ENCODE measurements at regions of chr1 and their contacts with region 1.

Region 1: DNA sequence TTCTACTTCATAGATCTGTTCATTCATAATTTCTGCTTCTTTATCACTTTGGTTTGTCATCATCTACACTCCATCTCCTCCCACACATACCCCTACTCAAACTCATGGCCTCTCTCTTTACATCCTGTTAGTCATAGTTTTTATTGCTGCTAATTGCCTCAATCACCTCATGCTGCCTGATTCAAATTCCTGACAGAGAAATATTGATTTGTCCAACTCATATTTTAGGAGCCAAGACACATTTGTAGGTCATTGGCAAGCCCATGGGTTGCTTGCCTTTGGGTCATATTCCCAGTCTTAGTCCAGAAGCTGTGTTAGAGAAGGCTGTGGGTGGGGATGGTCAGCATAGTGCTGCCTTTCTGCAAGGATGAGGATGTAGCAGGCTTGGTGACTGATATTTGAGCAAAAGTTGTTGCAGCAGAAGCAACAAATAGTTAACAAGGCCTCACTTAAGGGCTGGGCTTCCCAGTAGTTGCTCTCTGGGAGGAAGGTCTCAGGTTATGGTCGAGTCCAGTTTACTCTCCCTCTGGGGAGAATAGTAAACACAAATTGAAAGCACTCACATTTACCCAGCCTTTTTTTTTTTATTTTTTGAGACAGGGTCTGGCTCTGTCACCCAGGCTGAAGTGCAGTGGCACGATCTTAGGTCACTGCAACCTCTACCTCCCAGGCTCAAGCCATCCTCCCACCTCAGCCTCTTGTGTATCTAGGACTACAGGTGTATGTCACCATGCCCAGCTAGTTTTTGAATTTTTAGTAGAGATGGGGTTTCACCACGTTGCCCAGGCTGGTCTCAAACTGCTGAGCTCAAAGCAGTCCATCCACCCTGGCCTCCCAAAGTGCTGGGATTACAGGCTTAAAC is 22.5 kb upstream of the EPS15 start:
- DNase-seq: no peak
- H3K4me3 Mint-ChIP-seq: peak overlapping the region; percentile 0
- H3K27ac Mint-ChIP-seq: peak overlapping the region; percentile 11
- H3K4me1 Mint-ChIP-seq: peaks cover 29% of the 10 kb centered on the region
- H3K27me3 Mint-ChIP-seq: no peaks in the 10 kb centered on the region

Region 2: GRCh38 chr1:51504806-51505525 is 36.6 kb before region 1 on chr1:
- intact Hi-C with region 1: loop called (anchors 1 kb)
- DNase-seq: no peak
- H3K4me3 Mint-ChIP-seq: no peak overlapping the region
- H3K27ac Mint-ChIP-seq: peak overlapping the region; percentile 73
- H3K4me1 Mint-ChIP-seq: peaks cover 18% of the 10 kb centered on the region
- H3K27me3 Mint-ChIP-seq: no peaks in the 10 kb centered on the region

Region 3: GRCh38 chr1:51605961-51606723 is 64.6 kb after region 1 on chr1:
- intact Hi-C with region 1: no loop called
- DNase-seq: no peak
- H3K4me3 Mint-ChIP-seq: no peak overlapping the region
- H3K27ac Mint-ChIP-seq: no peak overlapping the region
- H3K4me1 Mint-ChIP-seq: no peaks in the 10 kb centered on the region
- H3K27me3 Mint-ChIP-seq: peaks cover 11% of the 10 kb centered on the region